HepG2 (cell line): ENCODE measurements at regions of chr18 and their contacts with region 1.

Region 1: DNA sequence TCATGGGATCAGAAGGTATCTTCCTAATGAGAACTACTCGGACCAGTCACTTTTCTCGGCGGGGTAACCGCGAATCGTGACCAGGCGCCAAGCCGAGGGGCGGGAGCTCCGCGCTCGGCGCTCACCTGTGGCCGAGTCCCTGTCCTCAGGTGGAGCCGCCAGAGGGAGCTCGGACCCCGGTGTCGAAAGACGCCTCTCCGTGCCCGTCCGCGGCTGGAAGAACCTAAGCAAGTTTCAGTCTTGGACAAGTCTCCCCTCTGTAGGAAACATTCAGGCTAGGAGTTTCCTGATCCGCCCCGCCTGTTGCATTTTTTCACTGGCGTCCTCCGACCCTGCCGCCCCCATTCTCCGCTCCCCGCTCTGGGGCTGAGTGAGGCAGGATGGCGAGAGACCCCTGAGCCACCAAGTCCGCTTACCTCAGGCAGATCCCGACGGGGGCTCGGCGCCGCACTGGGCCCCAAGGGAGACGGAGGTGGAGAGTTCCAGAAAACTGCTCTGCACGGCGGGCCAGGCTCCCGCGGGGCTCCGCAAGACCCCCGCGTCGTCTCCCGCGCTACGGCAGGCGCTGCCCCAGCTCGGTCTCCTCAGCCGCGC is 478 bp downstream of the DSEL start:
- DNase-seq: peak; percentile 50
- ATAC-seq: peak; percentile 84
- H3K4me3 ChIP-seq: peak overlapping the region; percentile 46 to 70 (median 58); a peak in 5 of 6 replicates
- H3K27ac ChIP-seq: no peak overlapping the region
- H3K4me1 ChIP-seq: peaks cover 7% of the 10 kb centered on the region
- H3K27me3 ChIP-seq: peaks cover 0 to 20% of the 10 kb centered on the region in 2 experiments; a peak in 2 of 5 replicates
- CTCF ChIP-seq: peak; percentile 93
- EP300 ChIP-seq: no peak
- POLR2A ChIP-seq: no peak
- RAD21 ChIP-seq: peak; percentile 79

Region 2: DNA sequence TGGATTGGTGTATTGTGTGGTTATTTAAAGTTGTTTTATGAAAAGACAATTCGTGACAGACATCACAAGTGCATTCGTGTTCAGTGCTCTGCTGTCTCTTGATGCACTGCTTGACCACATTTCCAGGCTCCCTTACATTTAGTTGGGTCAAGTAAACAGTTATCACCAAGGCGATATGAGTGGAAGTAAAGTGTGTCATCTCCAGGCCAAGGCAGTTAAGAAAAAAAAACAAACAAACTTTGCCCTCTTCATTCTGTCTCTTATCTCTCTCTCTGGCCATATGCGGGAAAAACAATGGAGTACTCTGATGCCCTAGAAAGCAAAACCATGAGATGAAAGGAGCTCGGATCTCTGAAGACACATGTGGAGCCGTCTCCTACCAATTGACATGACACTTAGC is 130.6 kb before region 1 on chr18:
- CTCF ChIA-PET with region 1: no interaction called
- POLR2A ChIA-PET with region 1: interaction called, 5 read pairs
- in situ Hi-C with region 1: no loop called
- intact Hi-C with region 1: loop called (anchors 10 kb)
- DNase-seq: peak; percentile 78
- ATAC-seq: peak; percentile 75
- H3K4me3 ChIP-seq: peak overlapping the region in 1 of 3 experiments; percentile 12; a peak in 1 of 6 replicates
- H3K27ac ChIP-seq: peak overlapping the region; percentile 51
- H3K4me1 ChIP-seq: peaks cover 31% of the 10 kb centered on the region
- H3K27me3 ChIP-seq: no peaks in the 10 kb centered on the region
- CTCF ChIP-seq: no peak
- EP300 ChIP-seq: peak in 1 of 2 experiments; percentile 76; a peak in 2 of 4 replicates
- POLR2A ChIP-seq: no peak
- RAD21 ChIP-seq: no peak

Region 3: DNA sequence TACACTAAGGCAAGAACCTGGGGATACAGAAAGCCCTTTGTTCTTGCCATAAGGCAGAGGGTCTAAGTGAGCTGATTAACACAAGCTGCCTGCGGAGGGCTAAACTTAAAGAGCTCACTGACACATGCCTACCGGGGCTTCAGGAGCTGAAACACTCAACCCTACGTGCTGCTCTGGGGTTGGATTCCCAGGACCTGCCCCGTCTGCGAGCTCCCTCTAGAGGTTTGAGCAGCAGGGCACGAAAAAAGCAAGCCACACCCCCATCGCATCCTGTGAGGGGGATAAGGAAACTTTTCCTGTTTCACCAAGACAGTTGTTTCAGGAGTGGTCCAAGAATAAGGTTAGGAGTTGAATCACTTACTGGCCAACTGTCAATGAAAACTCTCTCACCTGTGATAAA is 636.7 kb after region 1 on chr18:
- CTCF ChIA-PET with region 1: no interaction called
- POLR2A ChIA-PET with region 1: no interaction called
- in situ Hi-C with region 1: no loop called
- intact Hi-C with region 1: loop called (anchors 2 kb)
- DNase-seq: peak; percentile 1
- ATAC-seq: peak; percentile 79
- H3K4me3 ChIP-seq: no peak overlapping the region
- H3K27ac ChIP-seq: no peak overlapping the region
- H3K4me1 ChIP-seq: no peaks in the 10 kb centered on the region
- H3K27me3 ChIP-seq: no peaks in the 10 kb centered on the region
- CTCF ChIP-seq: peak; percentile 51
- EP300 ChIP-seq: no peak
- POLR2A ChIP-seq: no peak
- RAD21 ChIP-seq: no peak

Region 4: DNA sequence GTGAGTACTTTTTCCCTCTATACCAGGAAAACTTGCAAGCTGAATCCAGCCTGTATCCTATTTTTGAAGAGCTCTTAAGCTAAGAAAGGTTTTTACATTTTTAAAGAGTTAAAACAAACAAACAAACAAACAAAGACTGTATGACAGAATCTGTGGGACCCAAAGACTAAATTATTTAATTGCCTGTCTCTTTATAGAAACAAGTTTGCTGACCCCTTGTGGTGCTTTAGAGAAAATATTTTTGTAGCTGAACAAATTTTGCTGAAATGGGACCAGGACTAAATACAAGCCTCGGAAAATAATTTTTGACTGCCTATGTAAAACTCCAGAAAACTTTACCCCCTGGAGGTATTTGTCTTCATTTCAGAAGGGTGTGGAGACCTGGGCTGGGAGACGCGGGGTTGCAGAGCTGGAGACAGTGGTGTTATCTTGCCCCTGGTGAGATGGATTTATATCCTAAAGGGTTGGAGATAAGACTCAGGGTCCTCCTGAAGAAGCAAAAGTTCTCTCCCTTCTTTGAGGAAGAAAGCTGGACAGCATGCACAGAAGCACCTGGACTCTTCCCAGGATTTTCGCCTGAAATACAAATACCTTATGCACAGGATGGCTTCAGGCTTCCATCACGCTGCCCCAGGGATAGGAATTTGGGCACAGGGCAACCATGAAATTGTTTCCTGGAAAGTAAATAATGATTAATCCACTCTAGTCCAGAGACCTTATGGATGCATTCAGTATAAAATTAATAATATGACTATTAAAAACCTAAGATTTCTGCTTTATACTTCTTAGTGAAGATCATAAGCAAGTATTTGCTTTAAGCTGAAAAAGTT is 1144.5 kb after region 1 on chr18:
- CTCF ChIA-PET with region 1: no interaction called
- POLR2A ChIA-PET with region 1: no interaction called
- in situ Hi-C with region 1: no loop called
- intact Hi-C with region 1: loop called (anchors 1 kb)
- DNase-seq: peak; percentile 33
- ATAC-seq: no peak
- H3K4me3 ChIP-seq: no peak overlapping the region
- H3K27ac ChIP-seq: no peak overlapping the region
- H3K4me1 ChIP-seq: no peaks in the 10 kb centered on the region
- H3K27me3 ChIP-seq: no peaks in the 10 kb centered on the region
- CTCF ChIP-seq: peak; percentile 32; the same call in 1 of the 2 replicates
- EP300 ChIP-seq: no peak
- POLR2A ChIP-seq: no peak
- RAD21 ChIP-seq: no peak